Right lobe of liver (tissue), 6 donors: ENCODE measurements at regions of chr1 and their contacts with region 1.

Region 1: GRCh38 chr1:147494998-147495580 is 46.2 kb upstream of the BCL9 start:
- DNase-seq: peak; percentile 73 to 76 (median 74)
- ATAC-seq: peak; percentile 93 to 96 (median 95)
- H3K4me3 ChIP-seq: no peak overlapping the region
- H3K27ac ChIP-seq: no peak overlapping the region
- H3K4me1 ChIP-seq: peaks cover 0 to 4% (median 0%) of the 10 kb centered on the region in 4 donors
- H3K27me3 ChIP-seq: no peaks in the 10 kb centered on the region
- CTCF ChIP-seq: peak; percentile 89 to 92 (median 92)
- POLR2A ChIP-seq: no peak

Region 2: GRCh38 chr1:147627435-147628110 is 132.5 kb after region 1 on chr1:
- intact Hi-C with region 1: loop called in 1 of 2 experiments (anchors 5 kb)
- DNase-seq: peak in 2 of 3 donors; percentile 63 to 74
- ATAC-seq: peak; percentile 82 to 86 (median 85)
- H3K4me3 ChIP-seq: no peak overlapping the region
- H3K27ac ChIP-seq: no peak overlapping the region
- H3K4me1 ChIP-seq: peaks cover 0 to 27% (median 10%) of the 10 kb centered on the region in 4 donors
- H3K27me3 ChIP-seq: no peaks in the 10 kb centered on the region
- CTCF ChIP-seq: peak; percentile 69 to 91 (median 87)
- POLR2A ChIP-seq: no peak

Region 3: DNA sequence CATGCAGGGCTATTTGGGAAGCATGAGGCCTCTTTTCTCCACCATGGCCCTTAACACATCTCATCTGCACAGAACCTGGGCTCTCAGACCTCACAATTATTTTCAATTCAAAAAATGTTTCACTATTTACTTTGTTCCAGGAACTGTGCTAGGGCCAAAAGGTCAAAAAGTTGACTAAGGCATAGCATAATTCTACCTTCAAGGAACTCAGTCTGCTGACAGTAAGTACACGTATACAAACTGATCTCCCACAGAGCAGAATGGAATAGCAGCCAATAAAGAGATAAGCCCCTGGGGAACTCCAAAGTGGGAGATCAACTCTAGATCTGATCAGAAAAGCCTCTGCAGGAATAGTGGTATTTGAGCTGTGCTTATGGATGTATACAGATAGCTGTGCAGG is 373.9 kb after region 1 on chr1:
- intact Hi-C with region 1: no loop called
- DNase-seq: no peak
- ATAC-seq: no peak
- H3K4me3 ChIP-seq: no peak overlapping the region
- H3K27ac ChIP-seq: no peak overlapping the region
- H3K4me1 ChIP-seq: no peaks in the 10 kb centered on the region
- H3K27me3 ChIP-seq: no peaks in the 10 kb centered on the region
- CTCF ChIP-seq: no peak
- POLR2A ChIP-seq: no peak